Natural killer cell (primary cell): ENCODE measurements at regions of chr17 and their contacts with region 1.

Region 1: DNA sequence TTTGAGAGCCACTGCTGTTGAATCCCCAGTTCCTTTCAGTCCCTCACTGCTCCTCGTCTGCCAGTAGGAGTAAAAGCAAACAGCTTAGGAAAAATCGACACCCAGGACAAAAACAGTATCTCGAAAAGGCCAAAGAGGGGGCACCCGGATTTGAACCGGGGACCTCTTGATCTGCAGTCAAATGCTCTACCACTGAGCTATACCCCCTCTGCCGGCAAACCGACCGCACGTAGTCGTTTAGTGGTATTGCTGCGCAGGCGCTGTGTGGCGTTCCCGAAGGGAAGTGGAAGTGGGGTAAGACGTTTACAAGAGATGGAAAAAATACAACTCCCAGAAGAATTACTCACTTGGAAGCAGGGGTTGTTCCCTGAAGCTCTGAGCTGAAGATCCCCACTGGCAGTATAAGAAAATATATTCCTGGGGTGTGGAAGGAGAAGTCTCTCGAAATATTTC is 2.2 kb upstream of the PLXDC1 start:
- DNase-seq: peak; percentile 92 to 96
- ATAC-seq: peak; percentile 63 to 76 (median 64)
- H3K4me3 ChIP-seq: peak overlapping the region; percentile 91
- H3K4me3 Mint-ChIP-seq: peak overlapping the region; percentile 100
- H3K27ac ChIP-seq: peak overlapping the region; percentile 55
- H3K27ac Mint-ChIP-seq: peak overlapping the region; percentile 100
- H3K4me1 ChIP-seq: peaks cover 35% of the 10 kb centered on the region
- H3K4me1 Mint-ChIP-seq: peaks cover 41 to 48% of the 10 kb centered on the region in 2 donors
- H3K27me3 ChIP-seq: peaks cover 12% of the 10 kb centered on the region
- H3K27me3 Mint-ChIP-seq: peaks cover 18 to 21% of the 10 kb centered on the region in 2 donors
- CTCF ChIP-seq: no peak

Region 2: DNA sequence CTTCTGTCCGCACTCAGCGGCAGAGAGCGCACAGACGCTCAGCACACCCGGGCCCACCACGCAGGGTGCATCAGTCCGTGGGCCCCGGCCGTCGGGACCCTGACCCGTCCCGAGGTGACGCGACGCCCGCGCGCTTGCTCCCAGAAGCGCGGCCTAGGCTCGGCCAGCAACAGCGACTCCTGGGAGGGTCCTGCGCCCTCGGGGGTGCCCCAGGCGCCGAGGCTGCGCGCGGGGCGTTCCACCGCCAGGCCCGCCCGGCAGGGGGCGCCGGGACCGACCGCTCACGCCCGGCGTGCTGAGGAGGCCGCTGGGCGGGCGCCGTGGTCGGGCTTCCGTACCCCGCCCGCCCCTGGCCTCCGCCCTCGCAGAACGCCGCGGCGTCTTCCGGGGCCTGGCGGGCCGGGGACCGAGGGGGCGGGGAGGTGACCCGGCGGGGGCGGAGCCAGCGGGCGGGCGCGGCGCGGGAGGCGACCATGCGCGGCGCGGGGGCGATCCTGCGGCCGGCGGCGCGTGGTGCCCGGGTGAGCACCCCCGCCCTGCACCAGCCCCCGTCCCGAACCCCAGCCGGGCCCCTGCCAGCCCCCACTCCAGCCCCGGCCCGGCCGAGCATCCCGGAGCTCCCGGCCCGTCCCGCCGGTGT is 423.6 kb before region 1 on chr17 and contains the start of gene CISD3:
- intact Hi-C with region 1: loop called (anchors 5 kb)
- DNase-seq: peak; percentile 88 to 95
- ATAC-seq: peak; percentile 68 to 89 (median 79)
- H3K4me3 ChIP-seq: peak within 1 kb of the TSS; percentile 69
- H3K4me3 Mint-ChIP-seq: peak within 1 kb of the TSS; percentile 95
- H3K27ac ChIP-seq: peak within 1 kb of the TSS; percentile 82
- H3K27ac Mint-ChIP-seq: peak within 1 kb of the TSS; percentile 98 to 99
- H3K4me1 ChIP-seq: peaks cover 83% of the 10 kb centered on the region
- H3K4me1 Mint-ChIP-seq: peaks cover 86 to 93% of the 10 kb centered on the region in 2 donors
- H3K27me3 ChIP-seq: no peaks in the 10 kb centered on the region
- H3K27me3 Mint-ChIP-seq: no peaks in the 10 kb centered on the region
- CTCF ChIP-seq: peak; percentile 59
- total RNA-seq, gene CISD3: 32.6 to 37.4 (median 33.9) TPM

Region 3: GRCh38 chr17:38824899-38825761 is 328.5 kb before region 1 on chr17 and contains the start of gene CWC25:
- intact Hi-C with region 1: loop called (anchors 2 kb)
- DNase-seq: peak; percentile 98 to 100
- ATAC-seq: peak; percentile 85 to 90 (median 85)
- H3K4me3 ChIP-seq: peak within 1 kb of the TSS; percentile 80
- H3K4me3 Mint-ChIP-seq: peak within 1 kb of the TSS; percentile 94
- H3K27ac ChIP-seq: peak within 1 kb of the TSS; percentile 89
- H3K27ac Mint-ChIP-seq: peak within 1 kb of the TSS; percentile 97 to 100
- H3K4me1 ChIP-seq: peaks cover 18% of the 10 kb centered on the region
- H3K4me1 Mint-ChIP-seq: peaks cover 27 to 39% of the 10 kb centered on the region in 2 donors
- H3K27me3 ChIP-seq: no peaks in the 10 kb centered on the region
- H3K27me3 Mint-ChIP-seq: no peaks in the 10 kb centered on the region
- CTCF ChIP-seq: no peak
- total RNA-seq, gene CWC25: 63.8 to 79.4 (median 74.4) TPM

Region 4: DNA sequence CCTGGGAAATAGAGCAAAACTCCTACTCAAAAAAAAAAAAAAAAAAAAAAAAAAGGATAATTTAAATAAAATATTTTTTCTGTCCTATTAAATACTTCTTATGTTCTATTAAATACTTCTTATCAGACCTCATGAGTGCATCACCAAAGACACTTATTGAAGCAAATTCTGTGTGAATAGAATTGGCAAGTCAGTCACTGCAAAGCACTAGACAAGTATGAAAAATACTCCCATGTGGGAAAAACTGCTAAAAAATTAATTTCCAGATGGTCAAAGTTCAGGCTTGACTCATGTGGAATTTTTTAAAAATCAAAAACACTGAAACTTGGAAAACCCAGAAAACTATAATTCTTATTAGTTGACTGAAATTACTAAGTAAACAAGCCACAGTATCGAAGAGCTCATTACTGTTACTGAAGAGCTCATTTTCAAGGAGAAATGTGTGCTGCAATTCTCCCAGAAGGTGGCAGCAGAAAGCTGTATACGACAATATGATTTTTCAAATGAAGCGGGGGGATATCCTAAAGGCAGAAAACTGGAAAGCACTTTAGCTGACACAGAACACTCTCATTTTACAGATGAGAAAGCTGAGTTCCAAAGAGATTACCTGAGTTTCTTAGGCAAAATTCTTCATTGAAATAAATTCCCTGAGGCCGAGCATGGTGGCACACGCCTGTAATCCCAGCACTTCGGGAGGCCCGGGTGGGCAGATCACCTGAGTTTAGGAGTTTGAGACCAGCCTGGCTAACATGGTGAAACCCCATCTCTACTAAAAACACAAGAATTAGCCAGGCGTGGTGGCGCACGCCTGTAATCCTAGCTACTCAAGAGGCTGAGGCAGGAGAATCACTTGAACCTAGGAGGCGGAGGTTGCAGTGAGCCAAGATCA is 170.5 kb before region 1 on chr17:
- intact Hi-C with region 1: loop called (anchors 1 kb)
- DNase-seq: peak in 1 of 2 donors; percentile 84
- ATAC-seq: peak; percentile 68 to 80 (median 77)
- H3K4me3 ChIP-seq: no peak overlapping the region
- H3K4me3 Mint-ChIP-seq: no peak overlapping the region
- H3K27ac ChIP-seq: no peak overlapping the region
- H3K27ac Mint-ChIP-seq: no peak overlapping the region
- H3K4me1 ChIP-seq: no peaks in the 10 kb centered on the region
- H3K4me1 Mint-ChIP-seq: peaks cover 0 to 6% of the 10 kb centered on the region in 2 donors
- H3K27me3 ChIP-seq: no peaks in the 10 kb centered on the region
- H3K27me3 Mint-ChIP-seq: peaks cover 0 to 2% of the 10 kb centered on the region in 2 donors
- CTCF ChIP-seq: peak; percentile 87

Region 5: DNA sequence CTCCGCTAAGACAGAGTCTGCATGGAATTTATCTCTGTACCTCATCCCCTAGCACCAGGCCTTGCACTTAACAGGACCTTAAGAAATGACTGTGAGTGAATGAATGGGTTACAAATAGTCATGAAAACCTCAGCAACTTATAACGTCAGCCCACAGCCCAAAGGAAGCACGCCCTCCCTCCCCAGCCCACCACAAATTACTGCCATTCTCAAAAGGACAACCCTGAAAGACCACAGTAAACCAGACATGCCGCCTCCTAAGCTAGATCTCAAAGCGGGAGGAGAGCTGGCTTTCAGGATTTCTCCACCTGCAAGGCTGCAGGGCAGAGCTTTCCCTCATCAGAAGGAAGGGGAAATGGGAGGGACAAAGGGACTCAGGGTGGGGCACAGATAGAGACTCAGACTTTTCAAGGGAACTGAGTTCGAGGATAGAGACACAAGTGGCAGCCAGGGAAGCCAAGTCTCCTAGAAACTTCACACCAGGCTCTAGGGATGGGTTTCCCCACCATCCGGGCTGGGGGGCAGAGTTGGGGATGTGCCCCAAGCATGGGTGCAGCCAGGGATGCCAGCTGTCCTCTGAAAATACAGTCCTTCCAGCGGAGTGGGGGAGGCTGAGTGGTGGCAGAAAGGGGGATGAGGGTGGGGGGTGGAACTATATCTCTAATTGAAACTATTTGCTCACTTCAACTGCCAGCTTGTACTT is 58.9 kb before region 1 on chr17:
- intact Hi-C with region 1: loop called (anchors 2 kb)
- DNase-seq: peak; percentile 51 to 67
- ATAC-seq: peak; percentile 69 to 79 (median 72)
- H3K4me3 ChIP-seq: peak overlapping the region; percentile 24
- H3K4me3 Mint-ChIP-seq: peak overlapping the region; percentile 89
- H3K27ac ChIP-seq: peak overlapping the region; percentile 83
- H3K27ac Mint-ChIP-seq: peak overlapping the region; percentile 90 to 94
- H3K4me1 ChIP-seq: peaks cover 92% of the 10 kb centered on the region
- H3K4me1 Mint-ChIP-seq: peaks cover 82 to 86% of the 10 kb centered on the region in 2 donors
- H3K27me3 ChIP-seq: no peaks in the 10 kb centered on the region
- H3K27me3 Mint-ChIP-seq: no peaks in the 10 kb centered on the region
- CTCF ChIP-seq: no peak

Region 6: DNA sequence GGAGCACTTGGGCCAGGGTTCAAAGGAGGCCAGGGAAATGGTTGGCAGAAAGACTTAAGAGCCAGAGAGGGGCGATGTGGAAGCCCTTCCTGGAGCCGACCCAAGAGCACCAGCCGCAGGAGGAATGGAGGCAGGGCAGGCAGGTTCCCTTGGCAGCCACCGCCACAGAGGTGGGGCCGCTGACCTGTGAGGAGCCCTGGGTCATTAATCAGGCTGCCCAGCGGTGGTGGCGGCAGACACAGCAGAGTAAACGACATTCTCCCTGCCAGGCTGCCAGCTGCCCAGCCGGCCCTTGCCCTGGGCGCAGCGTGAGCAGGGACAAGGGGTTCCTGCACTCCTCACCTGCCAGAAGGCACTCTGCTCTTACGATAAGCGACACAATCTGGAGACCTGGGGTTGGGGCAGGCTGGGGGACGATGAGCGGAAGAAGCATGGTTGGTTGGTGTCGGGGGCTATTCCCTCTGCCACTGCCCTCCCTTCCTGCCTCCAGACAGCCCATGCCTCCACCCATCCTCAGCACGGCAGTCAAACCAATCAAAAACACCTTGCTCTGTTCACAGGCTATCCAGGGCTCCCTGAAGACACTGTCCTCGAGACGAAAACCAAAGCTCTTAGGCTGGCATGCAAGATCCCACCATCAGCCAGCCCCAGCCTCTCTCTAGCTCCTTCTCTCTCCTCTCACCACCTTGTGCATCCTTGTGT is 43.0 kb before region 1 on chr17:
- intact Hi-C with region 1: no loop called
- DNase-seq: no peak
- ATAC-seq: no peak
- H3K4me3 ChIP-seq: no peak overlapping the region
- H3K4me3 Mint-ChIP-seq: no peak overlapping the region
- H3K27ac ChIP-seq: no peak overlapping the region
- H3K27ac Mint-ChIP-seq: no peak overlapping the region
- H3K4me1 ChIP-seq: no peaks in the 10 kb centered on the region
- H3K4me1 Mint-ChIP-seq: peaks cover 0 to 10% of the 10 kb centered on the region in 2 donors
- H3K27me3 ChIP-seq: no peaks in the 10 kb centered on the region
- H3K27me3 Mint-ChIP-seq: peaks cover 0 to 3% of the 10 kb centered on the region in 2 donors
- CTCF ChIP-seq: no peak